ENCODE measurements at regions of chr2 and their contacts with region 1.

Region 1: DNA sequence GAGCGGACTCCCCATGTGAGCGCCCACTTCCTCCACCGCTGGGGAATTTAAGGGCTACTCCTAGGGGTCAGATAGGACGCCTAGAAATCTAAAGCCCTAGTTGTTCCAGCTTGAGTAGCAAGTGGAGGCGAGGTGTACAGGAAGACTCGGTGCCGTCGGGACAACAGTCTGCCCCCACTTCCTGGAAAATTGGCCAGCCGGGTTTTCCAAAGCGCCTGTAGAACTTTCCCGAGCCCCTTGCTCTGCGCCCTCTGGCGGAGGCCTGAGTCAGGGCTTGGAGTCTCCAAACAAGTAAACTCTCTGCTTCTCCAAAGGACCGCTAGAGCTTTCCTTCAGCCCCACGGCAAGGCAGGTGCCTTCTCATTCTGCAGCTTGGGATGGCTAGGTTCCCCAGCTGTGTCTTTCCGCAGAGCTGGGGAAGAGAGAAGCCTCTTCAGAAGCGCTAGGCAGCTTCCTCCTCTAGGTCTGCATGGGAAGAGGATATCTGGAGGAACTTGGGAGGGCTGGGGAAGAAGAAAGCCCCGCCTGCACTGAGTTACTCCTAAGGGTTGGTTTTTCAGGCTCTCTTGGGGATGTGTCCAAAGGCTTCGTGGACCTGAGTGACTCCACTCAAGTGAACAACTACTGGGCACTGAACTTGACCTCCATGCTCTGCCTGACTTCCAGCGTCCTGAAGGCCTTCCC is 688 bp downstream of the SPR start:
- DNase-seq: peak; percentile 50 to 94
- H3K4me3 ChIP-seq: peak overlapping the region; percentile 81 to 89
- H3K27ac ChIP-seq: peak overlapping the region; percentile 84 to 89
- H3K4me1 ChIP-seq: peaks cover 5 to 16% of the 10 kb centered on the region in 2 donors
- H3K27me3 ChIP-seq: no peaks in the 10 kb centered on the region
- CTCF ChIP-seq: peak; percentile 78 to 96 (median 95)

Region 2: DNA sequence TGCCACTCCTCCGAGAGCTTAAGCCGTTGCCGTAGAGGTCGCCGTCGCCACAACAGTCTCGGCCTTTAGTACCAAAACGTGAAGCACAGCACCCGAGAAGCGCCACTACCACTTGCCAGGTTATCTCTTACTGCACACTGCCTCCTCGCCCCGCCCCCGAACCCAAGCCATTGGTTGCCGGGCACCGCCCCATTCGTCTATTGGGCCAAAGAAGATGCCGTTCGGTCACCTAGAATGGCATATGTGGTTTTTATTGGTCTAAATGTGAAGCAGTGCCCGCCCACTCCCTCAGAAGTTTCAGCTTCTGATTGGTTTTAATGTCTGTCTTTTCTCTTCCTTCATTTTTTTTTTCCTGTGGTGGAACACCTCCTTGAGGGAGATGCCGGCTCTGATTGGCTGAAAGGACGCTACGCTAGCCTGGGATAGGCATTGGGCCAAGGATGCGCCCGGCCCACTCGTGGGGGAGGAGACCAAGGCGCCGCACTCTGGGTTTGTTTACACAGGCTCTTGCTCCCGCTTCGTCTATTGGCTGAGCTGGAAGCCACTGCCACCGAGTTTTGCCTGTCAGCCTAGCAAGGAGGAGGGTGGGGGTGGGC is 1660.8 kb before region 1 on chr2 and contains the start of gene PAIP2B:
- intact Hi-C with region 1: loop called (anchors 10 kb)
- DNase-seq: peak; percentile 97 to 99
- H3K4me3 ChIP-seq: peak within 1 kb of the TSS; percentile 67 to 85
- H3K27ac ChIP-seq: peak within 1 kb of the TSS; percentile 46 to 80
- H3K4me1 ChIP-seq: peaks cover 0 to 13% of the 10 kb centered on the region in 2 donors
- H3K27me3 ChIP-seq: no peaks in the 10 kb centered on the region
- CTCF ChIP-seq: no peak
- total RNA-seq, gene PAIP2B: 0.32 TPM

Region 3: DNA sequence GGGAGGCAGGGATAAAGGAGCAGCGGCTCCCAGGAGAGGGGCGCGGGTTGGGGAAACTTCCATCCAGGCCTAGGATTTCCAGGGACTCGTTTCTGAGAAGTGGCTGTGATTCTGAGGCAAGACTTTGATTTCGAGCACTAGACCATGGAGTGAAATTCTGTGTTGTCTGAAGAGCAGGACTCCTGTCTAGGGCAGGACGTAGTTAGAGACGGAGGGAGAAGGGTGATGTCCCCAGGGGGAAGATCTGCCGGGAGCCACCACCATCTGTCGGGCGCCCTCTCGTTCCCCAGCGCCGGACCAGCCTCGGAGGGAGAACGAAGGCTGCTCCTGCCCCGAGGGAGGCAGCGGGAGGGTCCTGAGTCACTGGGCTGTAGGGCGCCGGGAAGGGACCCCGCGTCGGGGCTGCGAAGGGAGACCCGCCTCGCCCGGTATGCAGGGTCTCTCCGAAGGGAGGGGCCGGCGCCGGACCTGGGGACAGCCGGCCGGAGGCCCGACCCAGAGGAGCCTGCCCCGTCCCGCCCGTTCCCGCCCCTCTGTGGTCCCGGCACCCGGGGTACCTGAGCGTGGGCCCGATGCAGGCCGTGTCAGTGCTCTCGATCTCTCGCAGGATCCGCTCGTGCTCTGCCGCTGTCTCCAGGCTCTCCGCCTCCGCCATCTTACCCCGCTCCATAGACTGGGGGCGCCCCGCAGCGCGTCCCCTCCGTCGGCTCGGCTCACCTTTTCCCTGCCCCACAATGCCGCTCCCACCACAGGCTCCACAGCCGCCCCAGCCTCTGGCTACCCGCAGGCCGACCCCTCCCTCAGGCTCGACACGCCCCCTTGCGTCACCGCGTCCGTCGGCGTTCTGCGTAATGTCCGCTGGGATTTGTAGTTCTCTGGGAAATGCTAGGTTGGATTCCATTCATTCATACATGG is 62.4 kb before region 1 on chr2 and contains the start of gene EXOC6B:
- intact Hi-C with region 1: loop called (anchors 2 kb)
- DNase-seq: peak; percentile 58 to 94
- H3K4me3 ChIP-seq: peak within 1 kb of the TSS; percentile 75 to 77
- H3K27ac ChIP-seq: peak within 1 kb of the TSS; percentile 70 to 75
- H3K4me1 ChIP-seq: peaks cover 0 to 4% of the 10 kb centered on the region in 2 donors
- H3K27me3 ChIP-seq: no peaks in the 10 kb centered on the region
- CTCF ChIP-seq: peak in 1 of 3 experiments; percentile 14
- total RNA-seq, gene EXOC6B: 32.4 TPM

Region 4: DNA sequence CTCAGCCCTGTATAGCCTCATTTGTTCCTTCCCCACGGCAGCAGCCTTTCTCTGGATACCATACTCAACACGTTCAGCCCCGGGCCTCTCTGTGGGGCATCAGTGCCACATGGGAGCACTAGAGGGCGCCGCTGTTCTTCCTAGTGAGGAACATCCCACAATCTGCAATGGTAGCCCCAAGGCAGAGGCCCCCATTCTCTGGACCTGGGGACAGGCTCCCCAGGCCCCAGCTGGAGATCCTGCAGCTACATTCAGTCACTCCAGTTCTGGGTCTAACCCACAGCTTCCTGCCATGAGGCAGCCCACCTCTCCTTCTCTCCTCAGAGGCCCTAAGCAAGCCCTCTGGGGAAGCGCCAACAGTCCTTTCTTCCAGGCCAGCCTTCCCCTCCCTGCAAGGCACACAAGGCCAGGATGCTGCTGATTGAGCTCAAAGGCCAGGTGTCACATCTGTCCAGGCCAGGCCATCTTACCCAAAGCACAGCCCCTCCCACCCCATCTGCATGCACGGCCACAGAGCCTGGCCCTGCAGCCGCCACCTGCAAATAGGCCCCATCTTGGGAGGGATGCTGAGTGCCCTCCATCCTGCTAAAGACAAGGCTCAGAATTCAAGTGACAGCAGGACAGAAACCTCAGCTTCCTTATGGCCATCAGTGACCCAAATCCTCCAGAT is 197.9 kb after region 1 on chr2:
- intact Hi-C with region 1: loop called (anchors 5 kb)
- DNase-seq: peak; percentile 44 to 91
- H3K4me3 ChIP-seq: peak overlapping the region in 1 of 2 donors; percentile 60
- H3K27ac ChIP-seq: no peak overlapping the region
- H3K4me1 ChIP-seq: peaks cover 19 to 58% of the 10 kb centered on the region in 2 donors
- H3K27me3 ChIP-seq: no peaks in the 10 kb centered on the region
- CTCF ChIP-seq: peak; percentile 85 to 97 (median 92)

Region 5: GRCh38 chr2:73112913-73113633 is 225.2 kb after region 1 on chr2 and contains the start of gene RAB11FIP5:
- intact Hi-C with region 1: loop called (anchors 5 kb)
- DNase-seq: peak in 1 of 2 donors; percentile 90
- H3K4me3 ChIP-seq: peak within 1 kb of the TSS; percentile 78 to 84
- H3K27ac ChIP-seq: peak within 1 kb of the TSS; percentile 92 to 98
- H3K4me1 ChIP-seq: peaks cover 0 to 18% of the 10 kb centered on the region in 2 donors
- H3K27me3 ChIP-seq: no peaks in the 10 kb centered on the region
- CTCF ChIP-seq: peak in 1 of 3 experiments; percentile 12
- total RNA-seq, gene RAB11FIP5: 95.3 TPM

Region 6: DNA sequence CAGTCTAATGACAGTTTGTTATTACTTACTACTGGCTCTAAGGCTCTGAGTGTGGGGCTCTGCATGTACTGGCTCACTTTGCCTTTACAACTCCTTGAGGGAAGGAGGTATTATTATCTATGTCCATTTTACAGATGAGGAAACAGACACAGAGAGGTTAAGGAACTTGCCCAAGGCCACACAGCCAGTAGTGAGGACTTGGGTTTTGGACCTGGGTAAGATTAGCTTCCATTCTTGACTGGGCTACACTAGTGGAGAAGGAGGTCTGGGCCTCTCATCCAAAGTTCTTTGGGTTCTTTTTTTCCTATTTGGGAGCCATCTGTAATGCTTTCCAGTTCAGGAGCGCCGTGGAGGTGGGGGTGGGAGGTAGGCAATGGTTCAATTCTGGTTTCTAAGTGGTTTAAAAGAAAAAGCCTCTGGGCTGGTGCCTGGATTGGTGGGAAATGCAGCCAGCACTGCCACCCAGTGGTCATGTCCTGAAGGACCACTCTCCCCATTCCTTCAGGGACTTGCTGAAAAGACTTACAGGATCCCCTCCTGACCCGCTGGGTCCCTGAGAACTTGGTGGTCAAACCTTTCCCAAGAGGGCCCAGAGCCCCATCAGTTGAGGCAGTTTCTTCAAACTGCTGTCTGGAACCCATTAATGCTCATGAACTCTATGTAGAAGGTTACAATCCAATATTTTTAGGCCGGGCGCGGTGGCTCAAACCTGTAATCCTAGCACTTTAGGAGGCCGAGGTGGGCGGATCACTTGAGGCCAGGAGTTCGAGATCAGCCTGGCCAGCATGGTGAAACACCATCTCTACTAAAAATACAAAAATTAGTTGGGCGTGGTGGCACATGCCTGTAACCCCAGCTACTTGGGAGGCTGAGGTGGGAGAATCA is 275.8 kb after region 1 on chr2:
- intact Hi-C with region 1: loop called (anchors 2 kb)
- DNase-seq: peak in 1 of 2 donors; percentile 83
- H3K4me3 ChIP-seq: no peak overlapping the region
- H3K27ac ChIP-seq: no peak overlapping the region
- H3K4me1 ChIP-seq: no peaks in the 10 kb centered on the region
- H3K27me3 ChIP-seq: no peaks in the 10 kb centered on the region
- CTCF ChIP-seq: peak; percentile 75 to 86 (median 81)